Activated B cell treated with CpG ODN at 0.5 μM for 24 hours (primary cell): ENCODE measurements at regions of chr11 and their contacts with region 1.

Region 1: DNA sequence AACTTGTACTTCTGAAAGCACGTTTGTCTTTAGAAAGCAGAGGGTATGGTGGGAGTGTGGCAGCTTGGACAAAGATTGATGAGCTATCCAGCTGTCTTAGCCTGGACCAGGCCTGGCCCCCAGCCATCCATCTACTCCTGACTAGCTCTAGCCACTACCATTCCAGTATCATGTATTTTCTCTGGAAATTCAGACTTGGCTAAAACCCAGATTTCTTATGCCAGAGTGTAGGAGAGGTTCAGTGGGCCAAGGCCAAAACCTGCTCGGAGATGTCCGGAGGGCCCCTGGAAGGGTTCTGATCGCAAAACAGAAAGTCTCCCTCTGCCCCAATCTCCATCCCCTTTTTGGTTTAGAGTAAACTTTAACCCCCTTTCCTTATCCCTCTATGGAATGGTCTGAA is 24.8 kb upstream of the MTCH2 start:
- DNase-seq: no peak
- ATAC-seq: no peak
- H3K4me3 Mint-ChIP-seq: no peak overlapping the region
- H3K27ac Mint-ChIP-seq: no peak overlapping the region
- H3K4me1 Mint-ChIP-seq: peaks cover 4% of the 10 kb centered on the region
- H3K27me3 Mint-ChIP-seq: no peaks in the 10 kb centered on the region
- CTCF ChIP-seq: no peak

Region 2: DNA sequence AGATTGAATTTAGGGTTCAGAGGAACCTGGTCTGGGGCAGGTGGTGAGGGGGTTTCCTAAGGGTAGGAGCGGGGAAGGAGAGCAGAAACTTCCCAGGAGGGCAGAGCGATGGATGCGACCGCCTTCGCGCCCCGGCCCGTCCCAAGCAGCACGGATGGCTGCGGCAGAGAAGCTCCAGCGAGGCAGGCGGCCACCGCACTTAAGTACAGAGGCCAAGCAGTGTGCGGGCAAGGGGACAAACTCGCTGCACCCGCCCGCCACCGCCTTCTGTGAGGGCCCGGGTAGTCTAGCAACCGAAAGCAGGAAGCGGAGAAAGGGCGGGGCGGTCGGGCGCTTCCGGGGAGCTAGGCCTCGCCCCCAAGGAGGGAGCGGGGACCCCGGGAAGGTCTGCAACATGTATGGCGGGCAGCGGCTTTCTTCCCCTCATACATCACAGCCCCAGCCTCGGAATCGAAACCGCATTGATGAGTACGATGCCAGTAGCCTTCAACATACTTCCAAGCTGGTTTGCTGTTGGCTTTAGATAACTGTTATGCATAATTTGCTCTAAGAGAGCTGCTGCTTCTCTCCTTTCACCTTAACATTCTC is 48.0 kb after region 1 on chr11 and contains the start of gene AGBL2:
- CTCF ChIA-PET with region 1: interaction called, 4 read pairs
- POLR2A ChIA-PET with region 1: interaction called, 15 read pairs
- intact Hi-C with region 1: no loop called
- DNase-seq: peak; percentile 82
- ATAC-seq: peak; percentile 99
- H3K4me3 Mint-ChIP-seq: peak within 1 kb of the TSS; percentile 96
- H3K27ac Mint-ChIP-seq: peak within 1 kb of the TSS; percentile 97
- H3K4me1 Mint-ChIP-seq: peaks cover 11% of the 10 kb centered on the region
- H3K27me3 Mint-ChIP-seq: no peaks in the 10 kb centered on the region
- CTCF ChIP-seq: no peak
- total RNA-seq, gene AGBL2: 7.0 and 8.2 TPM in 2 replicates

Region 3: DNA sequence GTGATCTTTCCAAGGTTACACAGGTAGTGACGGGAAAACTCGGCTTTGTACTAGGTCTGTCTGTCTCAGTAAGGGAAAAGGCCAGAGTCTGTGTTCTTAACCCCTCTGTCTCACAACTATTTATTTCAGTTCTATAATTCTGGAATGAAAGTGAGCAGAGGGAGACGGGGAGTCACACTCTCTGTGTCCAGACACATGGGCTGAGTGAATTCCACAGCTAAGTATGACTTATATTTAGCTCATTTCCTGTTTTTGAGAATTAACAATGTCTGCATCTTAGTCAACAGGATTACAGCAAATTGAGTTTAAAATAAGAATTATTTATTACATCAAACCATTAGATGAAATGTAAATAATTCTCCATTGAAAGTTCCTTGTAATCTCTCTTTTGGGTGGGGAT is 487.0 kb after region 1 on chr11:
- CTCF ChIA-PET with region 1: no interaction called
- POLR2A ChIA-PET with region 1: no interaction called
- intact Hi-C with region 1: no loop called
- DNase-seq: no peak
- ATAC-seq: no peak
- H3K4me3 Mint-ChIP-seq: no peak overlapping the region
- H3K27ac Mint-ChIP-seq: no peak overlapping the region
- H3K4me1 Mint-ChIP-seq: no peaks in the 10 kb centered on the region
- H3K27me3 Mint-ChIP-seq: no peaks in the 10 kb centered on the region
- CTCF ChIP-seq: no peak